ENCODE measurements at regions of chr15 and their contacts with region 1.

Region 1: DNA sequence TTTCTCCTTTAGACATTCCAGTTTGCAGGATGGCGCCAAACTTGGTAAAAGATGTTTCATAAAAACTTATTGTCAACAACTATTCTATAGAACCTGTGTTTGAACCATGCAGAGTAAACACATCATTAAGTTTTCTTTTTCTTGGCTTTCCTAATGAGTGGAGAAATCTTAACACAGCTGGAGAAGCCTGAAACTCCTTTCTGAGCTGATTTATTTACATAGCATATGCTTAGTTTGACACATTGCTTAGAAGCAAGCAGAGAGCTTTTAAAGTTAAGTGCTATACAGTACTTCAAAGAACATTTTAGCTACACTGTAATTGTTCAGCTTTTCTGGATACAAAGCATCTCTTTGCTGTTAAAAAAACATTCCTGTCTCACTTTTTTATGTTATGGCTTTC is 61.0 kb upstream of the PAQR5 start:
- DNase-seq: no peak
- H3K4me3 ChIP-seq: no peak overlapping the region
- H3K27ac ChIP-seq: no peak overlapping the region
- H3K4me1 ChIP-seq: no peaks in the 10 kb centered on the region
- H3K27me3 ChIP-seq: no peaks in the 10 kb centered on the region
- CTCF ChIP-seq: no peak

Region 2: GRCh38 chr15:69253156-69253555 is 15.4 kb after region 1 on chr15:
- CTCF ChIA-PET with region 1: no interaction called
- POLR2A ChIA-PET with region 1: interaction called, 12 read pairs
- intact Hi-C with region 1: no loop called
- DNase-seq: peak in 1 of 2 experiments; percentile 16
- H3K4me3 ChIP-seq: no peak overlapping the region
- H3K27ac ChIP-seq: no peak overlapping the region
- H3K4me1 ChIP-seq: 0 out of 2 replicates have a peak, but pooled peaks cover 4% of the 10 kb centered on the region
- H3K27me3 ChIP-seq: no peaks in the 10 kb centered on the region
- CTCF ChIP-seq: no peak

Measured in PC-9 (cell line).